ENCODE measurements at regions of chr10 and their contacts with region 1.

Region 1: GRCh38 chr10:31318854-31319601 is at the start of gene ZEB1:
- DNase-seq: peak; percentile 96
- H3K4me3 Mint-ChIP-seq: peak within 1 kb of the TSS; percentile 99
- H3K27ac Mint-ChIP-seq: peak within 1 kb of the TSS; percentile 100
- H3K4me1 Mint-ChIP-seq: peaks cover 42% of the 10 kb centered on the region
- H3K27me3 Mint-ChIP-seq: no peaks in the 10 kb centered on the region
- total RNA-seq, gene ZEB1: 71.9 and 79.0 TPM in 2 replicates

Region 2: GRCh38 chr10:30783939-30784500 is 535.0 kb before region 1 on chr10:
- intact Hi-C with region 1: loop called (anchors 2 kb)
- DNase-seq: peak; percentile 94
- H3K4me3 Mint-ChIP-seq: peak overlapping the region; percentile 84
- H3K27ac Mint-ChIP-seq: peak overlapping the region; percentile 86
- H3K4me1 Mint-ChIP-seq: peaks cover 30% of the 10 kb centered on the region
- H3K27me3 Mint-ChIP-seq: peaks cover 2% of the 10 kb centered on the region

Region 3: DNA sequence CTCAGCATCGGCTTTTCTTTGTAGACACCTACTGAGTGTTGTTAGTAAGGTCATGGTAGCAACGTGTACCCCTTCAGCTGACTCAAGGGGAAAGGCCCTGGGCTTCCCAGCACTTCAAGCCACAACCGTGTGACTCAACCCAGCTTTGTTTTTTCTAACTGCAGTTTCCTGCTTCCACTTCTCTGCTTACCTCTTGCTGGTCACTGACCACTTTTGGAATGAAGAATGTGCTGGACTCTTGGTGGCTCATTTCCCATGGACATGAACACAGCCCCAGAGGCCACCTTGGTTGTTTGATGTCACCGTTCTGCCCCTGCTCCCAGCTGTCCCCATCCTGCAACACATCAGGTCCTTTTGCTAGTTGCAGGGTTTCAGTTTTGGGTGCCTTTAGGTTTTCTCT is 217.9 kb before region 1 on chr10:
- intact Hi-C with region 1: loop called (anchors 2 kb)
- DNase-seq: peak; percentile 89
- H3K4me3 Mint-ChIP-seq: peak overlapping the region; percentile 76
- H3K27ac Mint-ChIP-seq: peak overlapping the region; percentile 93
- H3K4me1 Mint-ChIP-seq: peaks cover 60% of the 10 kb centered on the region
- H3K27me3 Mint-ChIP-seq: no peaks in the 10 kb centered on the region

Region 4: DNA sequence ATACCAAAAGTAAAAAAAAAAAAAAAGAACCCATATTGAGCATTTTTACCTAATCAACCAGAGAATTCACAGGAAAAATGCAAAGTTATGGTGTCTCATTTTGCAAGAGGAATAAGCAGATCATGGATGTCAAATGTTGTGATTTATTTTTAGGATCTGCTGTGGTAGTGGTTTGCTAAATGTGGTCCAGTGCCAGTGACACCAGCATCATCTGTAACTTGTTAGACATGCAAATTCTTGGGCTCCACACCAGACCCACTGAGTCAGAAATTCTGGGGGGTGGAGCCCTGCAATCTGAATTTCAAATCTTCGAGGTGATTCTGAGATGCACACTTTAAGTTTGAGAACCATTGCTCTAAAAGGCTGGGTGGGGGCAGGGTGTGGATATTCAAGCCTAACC is 30.1 kb before region 1 on chr10:
- intact Hi-C with region 1: no loop called
- DNase-seq: no peak
- H3K4me3 Mint-ChIP-seq: no peak overlapping the region
- H3K27ac Mint-ChIP-seq: no peak overlapping the region
- H3K4me1 Mint-ChIP-seq: peaks cover 2% of the 10 kb centered on the region
- H3K27me3 Mint-ChIP-seq: peaks cover 3% of the 10 kb centered on the region

Region 5: DNA sequence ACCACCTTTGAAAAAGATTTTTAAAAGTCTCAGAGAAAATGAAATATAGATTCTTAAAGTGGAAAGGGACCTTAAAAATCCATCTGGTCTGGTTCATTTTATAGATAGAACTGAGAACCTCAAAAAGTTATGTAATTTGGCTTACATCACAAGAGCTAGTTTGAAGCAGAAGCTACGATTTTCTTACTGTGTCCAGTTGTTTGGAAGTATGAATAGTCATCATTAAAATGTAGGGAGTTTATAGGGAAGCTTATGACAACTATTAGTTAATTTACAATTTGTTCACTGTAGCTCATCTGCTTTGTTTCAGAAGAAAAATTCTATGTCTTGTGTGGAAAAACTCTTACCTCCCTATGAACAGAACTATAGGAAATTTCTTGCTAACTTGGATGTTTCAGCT is 26.9 kb after region 1 on chr10:
- intact Hi-C with region 1: loop called (anchors 1 kb)
- DNase-seq: no peak
- H3K4me3 Mint-ChIP-seq: no peak overlapping the region
- H3K27ac Mint-ChIP-seq: no peak overlapping the region
- H3K4me1 Mint-ChIP-seq: peaks cover 42% of the 10 kb centered on the region
- H3K27me3 Mint-ChIP-seq: no peaks in the 10 kb centered on the region

Region 6: DNA sequence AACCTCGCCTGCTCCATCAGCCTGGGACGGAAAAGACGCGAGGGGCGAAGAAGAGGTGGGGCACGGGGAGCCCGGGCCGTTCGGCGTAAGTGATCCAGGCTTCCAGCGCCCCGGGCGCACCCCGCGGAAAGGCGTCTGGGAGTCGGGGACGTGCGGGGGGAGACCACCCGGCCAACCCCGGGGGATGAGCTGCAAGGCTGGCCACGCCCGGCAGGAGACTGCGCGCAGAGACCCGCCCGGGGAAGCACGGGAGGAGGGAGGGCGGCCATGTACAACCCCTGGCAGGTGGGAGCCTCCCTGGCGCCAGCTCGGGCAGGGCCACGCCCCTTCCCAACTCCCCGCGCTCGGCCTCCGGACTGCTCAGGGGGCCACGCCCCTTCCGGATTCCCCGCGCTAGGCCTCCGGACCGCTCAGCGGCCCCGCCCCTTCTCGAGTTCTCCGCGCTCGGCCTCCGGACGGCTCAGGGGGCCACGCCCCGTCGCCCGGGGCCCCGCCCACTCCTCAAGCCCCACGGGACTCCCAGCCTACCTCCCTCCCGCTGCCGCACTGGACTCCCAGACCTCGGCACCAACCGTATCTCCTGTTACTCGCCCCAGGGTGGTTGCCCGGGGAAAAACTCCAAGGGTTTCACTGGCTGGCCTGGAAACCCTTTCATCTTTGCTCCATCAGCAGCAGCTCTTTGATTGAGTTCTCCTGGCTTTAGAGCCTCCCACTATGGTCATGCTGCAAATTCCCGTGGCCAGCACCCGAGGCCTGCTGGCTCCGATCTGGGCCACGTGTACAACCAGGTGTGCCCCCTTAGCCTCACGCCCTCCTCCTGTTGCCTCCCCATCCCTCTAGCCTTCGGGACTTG is 284.4 kb after region 1 on chr10:
- intact Hi-C with region 1: loop called (anchors 2 kb)
- DNase-seq: peak; percentile 95
- H3K4me3 Mint-ChIP-seq: peak overlapping the region; percentile 88
- H3K27ac Mint-ChIP-seq: no peak overlapping the region
- H3K4me1 Mint-ChIP-seq: peaks cover 26% of the 10 kb centered on the region
- H3K27me3 Mint-ChIP-seq: peaks cover 3% of the 10 kb centered on the region